Dendritic cell treated with granulocyte-macrophage colony-stimulating factor and Interleukin-4, amounts not matched to agents 40 ng/mL and 50 ng/mL, for 4 days (primary cell): ENCODE measurements at regions of chr3 and their contacts with region 1.

Region 1: DNA sequence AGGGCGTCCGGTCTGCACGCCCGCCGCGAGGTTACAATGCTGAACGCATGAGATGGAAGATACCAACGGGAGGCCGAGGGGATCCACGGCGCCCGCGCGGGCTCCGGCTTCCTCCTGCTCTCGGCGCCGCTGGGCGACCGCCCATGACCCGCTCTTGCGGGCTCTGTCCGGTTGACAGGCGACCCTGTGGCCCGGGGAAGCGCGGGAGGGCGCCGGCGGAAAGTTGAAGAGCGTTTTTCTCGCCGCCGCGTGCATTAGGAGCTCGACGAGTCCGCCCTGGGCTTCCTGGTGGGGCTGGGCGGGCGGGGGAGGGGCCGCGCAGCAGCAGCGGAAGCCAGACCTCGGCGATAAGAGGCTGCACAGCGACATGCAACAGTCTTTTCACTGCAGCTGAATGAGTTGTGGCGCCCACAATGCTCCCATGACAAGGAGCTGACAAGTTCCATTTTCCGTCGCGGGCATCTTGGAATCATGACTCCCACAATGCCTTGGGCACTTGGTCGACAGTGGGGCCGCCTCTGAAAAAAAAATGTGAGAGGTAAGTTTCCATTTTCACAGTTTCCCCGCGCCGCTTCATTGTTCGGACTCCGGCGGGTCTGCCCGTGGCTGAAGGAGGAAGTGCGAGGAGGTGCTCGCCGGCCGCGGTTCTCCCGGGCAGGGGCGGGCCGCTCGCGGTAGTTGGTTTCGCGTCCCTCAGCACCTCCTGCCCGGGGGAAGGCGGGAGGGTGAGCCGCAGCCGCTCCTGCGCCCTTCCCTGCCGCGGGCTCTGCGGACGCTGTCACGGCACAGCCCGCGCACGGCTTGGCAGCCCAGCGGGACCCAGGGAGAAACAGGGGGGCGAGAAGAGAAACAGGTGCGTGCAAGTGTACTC is at the start of gene MBNL1:
- H3K4me3 Mint-ChIP-seq: peak within 1 kb of the TSS; percentile 96
- H3K27ac Mint-ChIP-seq: peak within 1 kb of the TSS; percentile 97
- H3K4me1 Mint-ChIP-seq: peaks cover 51% of the 10 kb centered on the region
- H3K27me3 Mint-ChIP-seq: no peaks in the 10 kb centered on the region

Region 2: DNA sequence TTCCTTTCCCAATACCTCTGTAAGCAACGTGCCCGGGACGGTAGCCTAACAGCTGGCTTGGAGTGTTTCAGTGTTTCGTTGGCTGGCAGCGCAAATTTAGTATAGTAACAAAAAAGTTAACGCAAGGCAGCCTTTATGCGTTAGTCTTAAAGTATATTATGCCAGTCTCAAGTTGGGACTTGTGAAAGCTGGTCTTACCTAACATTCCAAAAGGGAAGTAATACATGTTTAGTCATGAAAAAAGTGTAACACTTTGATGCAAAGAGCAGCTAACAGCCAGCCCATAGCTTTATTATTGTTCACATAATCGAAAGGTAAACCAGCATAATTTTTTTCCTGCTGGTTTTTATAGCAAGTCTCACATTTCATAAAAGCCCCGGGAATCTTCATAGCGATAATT is 949.8 kb before region 1 on chr3:
- intact Hi-C with region 1: no loop called
- H3K4me3 Mint-ChIP-seq: no peak overlapping the region
- H3K27ac Mint-ChIP-seq: no peak overlapping the region
- H3K4me1 Mint-ChIP-seq: peaks cover 40% of the 10 kb centered on the region
- H3K27me3 Mint-ChIP-seq: peaks cover 5% of the 10 kb centered on the region

Region 3: DNA sequence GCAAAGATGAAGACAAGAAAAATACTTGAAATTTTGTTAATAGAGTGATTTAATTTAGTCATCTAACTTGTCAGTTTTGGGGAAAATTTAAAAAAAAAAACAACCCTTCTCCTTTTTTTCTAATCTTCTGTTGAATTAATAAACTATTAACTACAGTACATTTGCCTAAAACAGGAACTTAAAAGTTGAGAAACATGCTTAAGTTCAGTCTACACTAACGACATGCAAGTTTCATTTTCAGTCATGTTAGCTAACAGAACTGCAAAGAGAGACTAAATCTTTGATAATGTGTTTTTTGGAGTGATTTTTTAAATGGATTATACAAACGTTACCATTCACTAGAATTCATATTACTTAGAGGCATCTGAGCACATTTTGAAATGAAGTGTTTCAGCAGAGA is 72.0 kb before region 1 on chr3:
- intact Hi-C with region 1: loop called (anchors 2 kb)
- H3K4me3 Mint-ChIP-seq: peak overlapping the region; percentile 70
- H3K27ac Mint-ChIP-seq: peak overlapping the region; percentile 95
- H3K4me1 Mint-ChIP-seq: peaks cover 49% of the 10 kb centered on the region
- H3K27me3 Mint-ChIP-seq: no peaks in the 10 kb centered on the region

Region 4: GRCh38 chr3:152243721-152244516 is 24.9 kb before region 1 on chr3:
- intact Hi-C with region 1: loop called (anchors 2 kb)
- H3K4me3 Mint-ChIP-seq: peak overlapping the region; percentile 77
- H3K27ac Mint-ChIP-seq: peak overlapping the region; percentile 91
- H3K4me1 Mint-ChIP-seq: peaks cover 27% of the 10 kb centered on the region
- H3K27me3 Mint-ChIP-seq: no peaks in the 10 kb centered on the region

Region 5: DNA sequence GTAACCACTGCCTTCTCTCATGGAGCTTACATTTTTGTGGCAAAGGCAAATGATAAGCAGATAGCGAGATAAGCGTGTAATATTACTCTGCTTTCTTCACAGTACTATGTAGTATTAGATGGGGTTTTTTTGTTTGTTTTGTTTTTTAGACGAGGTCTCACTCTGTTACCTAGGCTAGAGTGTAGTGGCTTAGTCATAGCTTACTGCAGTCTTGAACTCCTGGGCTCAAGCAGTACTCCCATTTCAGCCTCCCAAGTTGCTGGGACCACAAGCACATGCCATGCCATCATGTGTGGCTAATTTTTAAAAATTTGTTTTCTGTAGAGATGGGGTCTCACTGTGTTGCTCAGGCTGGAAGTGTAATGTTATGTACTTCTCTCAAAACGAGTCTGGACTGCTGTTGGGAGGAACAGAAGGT is 22.9 kb after region 1 on chr3:
- intact Hi-C with region 1: no loop called
- H3K4me3 Mint-ChIP-seq: no peak overlapping the region
- H3K27ac Mint-ChIP-seq: no peak overlapping the region
- H3K4me1 Mint-ChIP-seq: peaks cover 48% of the 10 kb centered on the region
- H3K27me3 Mint-ChIP-seq: no peaks in the 10 kb centered on the region

Region 6: GRCh38 chr3:152339881-152340505 is 71.2 kb after region 1 on chr3:
- intact Hi-C with region 1: no loop called
- H3K4me3 Mint-ChIP-seq: no peak overlapping the region
- H3K27ac Mint-ChIP-seq: no peak overlapping the region
- H3K4me1 Mint-ChIP-seq: peaks cover 27% of the 10 kb centered on the region
- H3K27me3 Mint-ChIP-seq: no peaks in the 10 kb centered on the region

Region 7: GRCh38 chr3:152352554-152352953 is 83.8 kb after region 1 on chr3:
- intact Hi-C with region 1: no loop called
- H3K4me3 Mint-ChIP-seq: no peak overlapping the region
- H3K27ac Mint-ChIP-seq: peak overlapping the region; percentile 68
- H3K4me1 Mint-ChIP-seq: peaks cover 10% of the 10 kb centered on the region
- H3K27me3 Mint-ChIP-seq: no peaks in the 10 kb centered on the region